Endothelial cell of umbilical vein (primary cell): ENCODE measurements at regions of chr19 and their contacts with region 1.

Region 1: DNA sequence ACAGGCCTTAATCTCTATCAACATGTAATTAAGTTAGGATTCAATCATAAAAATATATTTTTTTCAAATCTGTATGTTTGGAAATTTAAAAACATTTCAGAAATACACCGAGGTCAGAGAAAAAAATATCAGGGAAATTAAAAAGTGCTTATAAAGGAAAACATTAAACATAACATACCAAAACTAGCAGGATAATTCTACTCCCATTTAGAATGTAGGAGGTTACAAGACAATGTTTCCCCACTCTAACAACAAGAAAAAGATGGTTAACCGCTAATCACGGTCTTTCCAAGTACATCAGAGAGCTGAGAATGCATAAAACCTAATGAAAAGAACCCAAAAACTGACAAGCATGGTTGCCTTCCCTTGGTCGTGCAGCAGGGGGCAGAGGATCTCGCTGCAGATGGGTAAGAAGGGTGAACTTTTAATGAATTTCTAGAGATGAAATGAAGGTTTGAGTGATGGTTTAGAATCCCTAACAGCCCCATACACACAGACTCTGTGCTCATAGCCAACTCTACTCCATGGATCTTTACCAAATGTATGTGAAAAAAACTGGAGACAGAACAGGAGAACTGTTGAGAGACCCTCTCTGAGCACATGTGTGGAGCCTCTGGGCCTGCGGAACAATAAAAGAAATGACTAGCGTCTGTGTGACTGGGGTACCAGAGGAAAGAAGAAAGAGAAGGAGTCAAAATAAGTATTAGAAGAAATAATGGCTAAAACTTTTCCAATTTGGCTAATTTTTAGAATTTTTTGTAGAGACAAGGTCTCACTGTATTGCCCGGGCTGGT is 51.3 kb upstream of the LSM14A start:
- DNase-seq: peak; percentile 65
- H3K4me3 ChIP-seq: no peak overlapping the region
- H3K27ac ChIP-seq: no peak overlapping the region
- H3K4me1 ChIP-seq: no peaks in the 10 kb centered on the region
- H3K27me3 ChIP-seq: peaks cover 3 to 7% of the 10 kb centered on the region in 2 experiments
- CTCF ChIP-seq: peak; percentile 78 to 79
- POLR2A ChIP-seq: no peak

Region 2: DNA sequence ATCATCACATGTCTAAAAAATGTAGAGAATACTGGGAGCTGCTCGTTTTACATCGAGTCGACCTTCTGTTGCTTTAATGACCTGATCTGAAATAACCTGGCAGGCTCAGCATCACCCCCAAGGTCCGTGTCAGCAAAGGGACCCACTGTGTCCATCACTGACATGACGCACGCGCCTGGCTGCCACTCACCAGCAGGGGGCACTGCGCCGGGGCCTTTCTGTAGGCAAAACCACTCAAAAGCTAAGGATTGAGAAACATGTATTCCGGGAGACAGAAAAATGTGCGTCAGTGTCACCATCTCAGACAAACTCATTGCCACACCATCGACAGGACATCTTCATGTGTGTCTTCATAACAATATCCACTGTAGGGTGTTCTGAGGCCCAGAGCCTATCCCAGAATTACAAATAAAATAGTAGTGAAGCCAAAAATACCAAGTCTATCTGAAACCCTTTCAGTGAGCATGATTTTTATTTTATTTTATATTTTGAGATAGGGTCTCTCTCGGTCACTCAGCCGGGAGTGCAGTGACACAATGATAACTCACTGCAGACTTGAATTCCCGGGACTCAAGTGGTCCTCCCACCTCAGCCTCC is 79.0 kb before region 1 on chr19:
- CTCF ChIA-PET with region 1: interaction called, 15 read pairs
- POLR2A ChIA-PET with region 1: no interaction called
- dilution Hi-C with region 1: no loop called
- intact Hi-C with region 1: no loop called
- DNase-seq: peak; percentile 41
- H3K4me3 ChIP-seq: no peak overlapping the region
- H3K27ac ChIP-seq: no peak overlapping the region
- H3K4me1 ChIP-seq: no peaks in the 10 kb centered on the region
- H3K27me3 ChIP-seq: no peaks in the 10 kb centered on the region
- CTCF ChIP-seq: peak; percentile 96
- POLR2A ChIP-seq: no peak

Region 3: DNA sequence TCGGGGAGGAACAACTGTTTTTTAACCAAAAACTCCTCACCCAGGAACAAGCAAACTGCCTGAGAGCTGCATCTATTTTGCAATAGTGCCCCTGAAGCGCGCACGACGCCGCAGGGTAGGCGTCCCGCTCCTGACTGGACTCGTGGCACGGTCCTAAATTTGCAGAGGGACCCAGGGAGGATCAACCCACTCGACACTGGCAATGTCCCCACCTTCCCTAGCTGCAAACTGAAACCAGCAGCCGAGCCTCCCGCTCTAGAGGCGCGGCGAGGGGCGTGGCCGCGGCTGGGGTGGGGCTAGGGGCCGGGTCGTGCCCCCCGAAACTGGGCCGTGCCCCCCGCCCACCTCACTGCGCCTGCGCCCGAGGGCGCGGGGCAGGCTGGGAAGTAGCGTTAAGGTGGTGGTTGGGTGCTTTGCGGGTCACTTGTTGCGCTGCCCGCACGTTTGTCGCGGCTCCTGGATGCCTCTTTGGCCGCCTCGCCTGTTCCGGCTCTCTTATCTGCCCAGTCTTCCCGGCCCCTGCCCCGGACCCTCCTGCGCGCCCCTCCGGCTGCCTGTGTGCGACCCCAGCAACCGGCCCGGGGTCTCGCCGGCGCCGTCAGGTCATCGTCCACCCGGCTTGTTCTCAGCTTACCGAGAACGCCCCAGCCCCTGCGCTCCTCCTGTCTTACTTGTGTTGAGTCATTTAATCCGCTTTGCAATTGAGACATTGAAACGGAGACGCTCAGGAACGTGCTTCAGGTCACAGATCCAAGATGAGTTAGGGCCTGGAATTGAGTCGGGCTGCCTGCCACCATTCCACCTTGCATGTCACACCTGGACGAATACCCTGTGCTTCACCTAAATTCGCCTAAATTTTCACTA is 13.4 kb after region 1 on chr19:
- CTCF ChIA-PET with region 1: interaction called, 8 read pairs
- POLR2A ChIA-PET with region 1: no interaction called
- dilution Hi-C with region 1: no loop called
- intact Hi-C with region 1: loop called (anchors 1 kb)
- DNase-seq: peak; percentile 81
- H3K4me3 ChIP-seq: peak overlapping the region; percentile 57 to 84 (median 66)
- H3K27ac ChIP-seq: peak overlapping the region; percentile 33
- H3K4me1 ChIP-seq: no peaks in the 10 kb centered on the region
- H3K27me3 ChIP-seq: no peaks in the 10 kb centered on the region
- CTCF ChIP-seq: no peak
- POLR2A ChIP-seq: peak; percentile 94

Region 4: GRCh38 chr19:34145741-34146202 is 24.7 kb after region 1 on chr19:
- CTCF ChIA-PET with region 1: interaction called, 100 read pairs
- POLR2A ChIA-PET with region 1: no interaction called
- dilution Hi-C with region 1: no loop called
- intact Hi-C with region 1: loop called (anchors 1 kb)
- DNase-seq: peak; percentile 65
- H3K4me3 ChIP-seq: no peak overlapping the region
- H3K27ac ChIP-seq: no peak overlapping the region
- H3K4me1 ChIP-seq: no peaks in the 10 kb centered on the region
- H3K27me3 ChIP-seq: no peaks in the 10 kb centered on the region
- CTCF ChIP-seq: peak; percentile 68 to 71
- POLR2A ChIP-seq: no peak

Region 5: DNA sequence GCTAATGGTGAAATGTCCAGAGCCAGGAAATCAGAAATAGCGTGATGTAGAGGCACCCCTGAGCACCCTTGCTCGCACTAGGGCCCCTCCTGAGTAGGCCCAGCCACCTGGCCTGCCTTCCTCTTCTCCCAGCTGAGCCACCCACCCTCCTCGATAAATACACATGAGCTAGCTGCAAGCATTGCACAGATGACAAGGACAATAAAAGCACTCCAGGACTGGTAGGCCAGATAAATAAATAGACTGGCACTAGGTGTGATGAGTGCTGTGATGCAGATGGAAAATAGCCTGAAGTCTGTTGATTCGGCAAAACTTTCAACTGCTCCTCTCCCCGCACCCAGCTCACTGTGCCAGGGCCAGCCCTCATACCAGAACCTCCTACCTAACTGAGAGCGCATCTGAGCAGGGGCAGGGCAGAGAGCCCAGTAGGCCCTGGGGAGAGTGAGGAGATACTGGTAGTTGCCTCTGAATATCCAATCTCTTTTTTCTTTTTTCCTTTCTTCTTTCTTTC is 189.5 kb after region 1 on chr19:
- CTCF ChIA-PET with region 1: no interaction called
- POLR2A ChIA-PET with region 1: no interaction called
- dilution Hi-C with region 1: no loop called
- intact Hi-C with region 1: no loop called
- DNase-seq: no peak
- H3K4me3 ChIP-seq: no peak overlapping the region
- H3K27ac ChIP-seq: no peak overlapping the region
- H3K4me1 ChIP-seq: peaks cover 9% of the 10 kb centered on the region
- H3K27me3 ChIP-seq: no peaks in the 10 kb centered on the region
- CTCF ChIP-seq: no peak
- POLR2A ChIP-seq: no peak